ENCODE measurements at regions of chr7 and their contacts with region 1.

Region 1: DNA sequence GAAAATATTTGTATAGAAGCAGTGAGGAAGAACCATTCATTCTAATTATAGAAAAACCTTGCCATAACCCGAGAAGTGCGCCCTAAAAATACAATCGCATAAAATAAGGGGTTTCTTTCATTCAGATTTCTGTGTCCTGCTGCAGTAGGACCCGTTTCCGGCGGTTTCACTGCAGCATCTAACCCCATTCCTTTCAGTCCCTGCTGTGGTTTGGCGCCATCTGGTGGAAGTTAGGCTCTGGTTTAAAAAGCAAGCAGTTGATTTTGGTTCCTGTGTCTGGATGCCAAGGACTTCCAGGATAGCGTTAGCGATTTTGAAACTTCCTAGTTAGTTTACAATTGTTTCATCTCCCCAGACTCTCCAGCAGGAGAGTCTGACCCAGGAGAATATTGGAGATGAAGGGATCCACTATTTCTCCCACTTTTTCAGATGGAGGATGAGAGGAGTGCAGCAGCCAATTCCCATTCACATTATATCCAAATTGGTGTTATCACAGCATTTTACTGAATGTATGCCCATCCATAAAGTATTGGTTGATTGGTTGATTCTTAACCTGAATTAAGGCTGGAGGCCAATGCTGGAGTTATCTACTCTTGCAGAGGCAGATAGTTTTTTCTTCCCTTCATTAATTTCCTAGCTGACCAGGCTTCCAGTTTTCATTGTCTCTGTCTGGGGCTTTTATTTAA is 128.8 kb upstream of the CACNA2D1 start:
- DNase-seq: peak; percentile 32
- H3K4me3 Mint-ChIP-seq: no peak overlapping the region
- H3K27ac Mint-ChIP-seq: no peak overlapping the region
- H3K4me1 Mint-ChIP-seq: no peaks in the 10 kb centered on the region
- H3K27me3 Mint-ChIP-seq: no peaks in the 10 kb centered on the region

Region 2: GRCh38 chr7:81482600-81483186 is 1089.6 kb before region 1 on chr7:
- intact Hi-C with region 1: loop called (anchors 5 kb)
- DNase-seq: no peak
- H3K4me3 Mint-ChIP-seq: no peak overlapping the region
- H3K27ac Mint-ChIP-seq: no peak overlapping the region
- H3K4me1 Mint-ChIP-seq: no peaks in the 10 kb centered on the region
- H3K27me3 Mint-ChIP-seq: no peaks in the 10 kb centered on the region

Region 3: GRCh38 chr7:82044497-82045080 is 527.7 kb before region 1 on chr7:
- intact Hi-C with region 1: loop called (anchors 2 kb)
- DNase-seq: no peak
- H3K4me3 Mint-ChIP-seq: no peak overlapping the region
- H3K27ac Mint-ChIP-seq: no peak overlapping the region
- H3K4me1 Mint-ChIP-seq: no peaks in the 10 kb centered on the region
- H3K27me3 Mint-ChIP-seq: no peaks in the 10 kb centered on the region

Region 4: GRCh38 chr7:82234457-82235049 is 337.8 kb before region 1 on chr7:
- intact Hi-C with region 1: loop called (anchors 10 kb)
- DNase-seq: no peak
- H3K4me3 Mint-ChIP-seq: no peak overlapping the region
- H3K27ac Mint-ChIP-seq: no peak overlapping the region
- H3K4me1 Mint-ChIP-seq: no peaks in the 10 kb centered on the region
- H3K27me3 Mint-ChIP-seq: no peaks in the 10 kb centered on the region

Region 5: GRCh38 chr7:82624337-82624736 is 52.0 kb after region 1 on chr7:
- intact Hi-C with region 1: no loop called
- DNase-seq: no peak
- H3K4me3 Mint-ChIP-seq: no peak overlapping the region
- H3K27ac Mint-ChIP-seq: no peak overlapping the region
- H3K4me1 Mint-ChIP-seq: no peaks in the 10 kb centered on the region
- H3K27me3 Mint-ChIP-seq: no peaks in the 10 kb centered on the region